ENCODE measurements at regions of chr10 and their contacts with region 1.

Region 1: GRCh38 chr10:67520924-67521520 is 175.0 kb downstream of the CTNNA3 start:
- DNase-seq: peak; percentile 2
- ATAC-seq: peak; percentile 97
- H3K4me3 ChIP-seq: no peak overlapping the region
- H3K27ac ChIP-seq: no peak overlapping the region
- H3K4me1 ChIP-seq: no peaks in the 10 kb centered on the region
- H3K27me3 ChIP-seq: no peaks in the 10 kb centered on the region
- CTCF ChIP-seq: peak; percentile 65 to 85 (median 74)
- EP300 ChIP-seq: no peak
- POLR2A ChIP-seq: no peak
- RAD21 ChIP-seq: peak; percentile 89

Region 2: GRCh38 chr10:66925896-66926715 is 594.9 kb before region 1 on chr10 and contains the start of gene LRRTM3:
- CTCF ChIA-PET with region 1: interaction called, 80 read pairs
- POLR2A ChIA-PET with region 1: no interaction called
- RAD21 ChIA-PET with region 1: interaction called, 10 read pairs
- SMC1A ChIA-PET with region 1: interaction called, 20 read pairs
- in situ Hi-C with region 1: no loop called
- intact Hi-C with region 1: loop called (anchors 5 kb)
- DNase-seq: peak; percentile 20
- ATAC-seq: peak; percentile 100
- H3K4me3 ChIP-seq: no peak within 1 kb of the TSS
- H3K27ac ChIP-seq: no peak within 1 kb of the TSS
- H3K4me1 ChIP-seq: no peaks in the 10 kb centered on the region
- H3K27me3 ChIP-seq: peaks cover 0 to 8% of the 10 kb centered on the region in 2 experiments; a peak in 2 of 4 replicates
- CTCF ChIP-seq: peak; percentile 67 to 76 (median 70); a peak in 5 of 6 replicates
- EP300 ChIP-seq: no peak
- POLR2A ChIP-seq: no peak
- RAD21 ChIP-seq: peak; percentile 53
- polyA plus RNA-seq, gene LRRTM3: not detected

Region 3: DNA sequence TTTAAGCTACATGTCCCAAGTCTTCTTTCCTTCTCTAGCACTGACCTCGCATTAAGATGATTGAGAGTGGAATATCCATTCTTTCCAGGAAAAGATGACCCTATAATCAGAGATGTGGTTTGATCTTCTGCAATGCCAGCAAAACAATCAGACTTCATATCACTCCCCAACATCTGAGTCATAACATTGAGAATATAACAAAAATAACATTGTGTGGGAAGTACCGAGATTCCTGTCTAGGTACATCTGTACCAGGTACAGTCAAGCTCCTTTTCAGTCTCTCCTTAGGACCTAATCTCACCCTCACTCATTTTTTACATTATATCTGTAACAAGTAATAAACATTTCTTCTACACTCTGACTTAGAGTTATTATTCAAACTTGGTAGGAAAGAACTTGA is 393.6 kb before region 1 on chr10:
- CTCF ChIA-PET with region 1: no interaction called
- POLR2A ChIA-PET with region 1: no interaction called
- RAD21 ChIA-PET with region 1: no interaction called
- SMC1A ChIA-PET with region 1: no interaction called
- in situ Hi-C with region 1: no loop called
- intact Hi-C with region 1: no loop called
- DNase-seq: no peak
- ATAC-seq: no peak
- H3K4me3 ChIP-seq: no peak overlapping the region
- H3K27ac ChIP-seq: no peak overlapping the region
- H3K4me1 ChIP-seq: no peaks in the 10 kb centered on the region
- H3K27me3 ChIP-seq: no peaks in the 10 kb centered on the region
- CTCF ChIP-seq: no peak
- EP300 ChIP-seq: no peak
- POLR2A ChIP-seq: no peak
- RAD21 ChIP-seq: no peak

Region 4: DNA sequence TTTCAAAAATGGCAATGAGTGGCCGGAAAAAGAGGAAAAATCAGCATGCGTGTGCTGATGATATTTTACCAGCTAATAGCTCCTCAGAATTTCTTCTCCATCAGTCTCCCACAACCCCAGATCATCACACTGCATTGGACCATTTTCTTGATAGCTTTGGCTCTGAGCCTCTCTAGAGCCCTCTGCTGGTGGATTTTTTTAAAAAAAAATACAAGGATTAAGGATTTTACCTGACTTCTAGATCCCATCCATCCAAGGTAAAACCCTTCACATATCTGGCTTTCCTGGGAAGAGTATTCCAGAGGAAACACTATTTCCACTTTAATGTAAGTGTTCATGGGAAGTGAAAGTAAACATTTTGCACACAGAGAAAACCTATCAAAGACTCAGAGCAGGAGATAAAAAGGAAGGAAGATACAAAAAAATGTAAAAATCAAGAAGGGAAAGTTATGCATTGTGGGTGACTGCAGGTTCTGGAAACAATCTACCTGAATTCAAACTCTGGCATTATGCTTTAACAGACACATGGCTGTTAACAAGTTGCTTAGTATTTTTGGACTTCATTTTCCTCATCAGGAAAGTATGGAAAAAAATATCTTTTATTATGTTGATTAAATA is 214.3 kb before region 1 on chr10:
- CTCF ChIA-PET with region 1: interaction called, 5 read pairs
- POLR2A ChIA-PET with region 1: no interaction called
- RAD21 ChIA-PET with region 1: interaction called, 5 read pairs
- SMC1A ChIA-PET with region 1: interaction called, 12 read pairs
- in situ Hi-C with region 1: no loop called
- intact Hi-C with region 1: loop called (anchors 5 kb)
- DNase-seq: no peak
- ATAC-seq: no peak; the same call in 2 of the 3 replicates
- H3K4me3 ChIP-seq: no peak overlapping the region
- H3K27ac ChIP-seq: no peak overlapping the region
- H3K4me1 ChIP-seq: no peaks in the 10 kb centered on the region
- H3K27me3 ChIP-seq: no peaks in the 10 kb centered on the region
- CTCF ChIP-seq: peak; percentile 32 to 47 (median 39); a peak in 5 of 6 replicates
- EP300 ChIP-seq: no peak
- POLR2A ChIP-seq: no peak
- RAD21 ChIP-seq: peak; percentile 37; the same call in 1 of the 2 replicates

Region 5: DNA sequence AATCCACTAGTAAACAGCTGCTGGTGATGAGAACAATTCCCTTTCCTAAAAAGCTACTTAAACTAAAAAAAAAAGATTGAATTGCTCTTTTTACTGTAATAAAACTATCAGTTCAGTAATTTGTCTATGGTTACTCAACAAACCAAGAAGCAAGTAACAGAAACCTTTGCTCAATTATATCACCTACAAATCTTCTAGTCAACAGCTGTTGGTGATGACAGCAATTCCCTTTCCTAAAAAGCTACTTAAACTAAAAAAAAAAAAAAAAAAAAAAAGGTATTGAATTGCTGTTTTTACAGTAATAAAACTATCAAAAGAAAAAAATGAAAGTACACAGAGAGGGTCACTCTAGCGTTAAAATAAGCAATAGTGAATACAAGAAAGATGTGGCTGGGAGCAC is 16.9 kb after region 1 on chr10:
- CTCF ChIA-PET with region 1: interaction called, 22 read pairs
- POLR2A ChIA-PET with region 1: no interaction called
- RAD21 ChIA-PET with region 1: interaction called, 14 read pairs
- SMC1A ChIA-PET with region 1: interaction called, 21 read pairs
- in situ Hi-C with region 1: no loop called
- intact Hi-C with region 1: no loop called
- DNase-seq: no peak
- ATAC-seq: no peak
- H3K4me3 ChIP-seq: no peak overlapping the region
- H3K27ac ChIP-seq: no peak overlapping the region
- H3K4me1 ChIP-seq: no peaks in the 10 kb centered on the region
- H3K27me3 ChIP-seq: no peaks in the 10 kb centered on the region
- CTCF ChIP-seq: no peak
- EP300 ChIP-seq: no peak
- POLR2A ChIP-seq: no peak
- RAD21 ChIP-seq: no peak

Region 6: GRCh38 chr10:67618116-67618515 is 97.1 kb after region 1 on chr10:
- CTCF ChIA-PET with region 1: interaction called, 4 read pairs
- POLR2A ChIA-PET with region 1: no interaction called
- RAD21 ChIA-PET with region 1: no interaction called
- SMC1A ChIA-PET with region 1: interaction called, 11 read pairs
- in situ Hi-C with region 1: no loop called
- intact Hi-C with region 1: no loop called
- DNase-seq: no peak
- ATAC-seq: no peak
- H3K4me3 ChIP-seq: no peak overlapping the region
- H3K27ac ChIP-seq: no peak overlapping the region
- H3K4me1 ChIP-seq: no peaks in the 10 kb centered on the region; the same call in 1 of the 2 replicates
- H3K27me3 ChIP-seq: no peaks in the 10 kb centered on the region
- CTCF ChIP-seq: no peak
- EP300 ChIP-seq: no peak
- POLR2A ChIP-seq: no peak
- RAD21 ChIP-seq: no peak

Region 7: GRCh38 chr10:68419376-68419775 is 898.4 kb after region 1 on chr10:
- CTCF ChIA-PET with region 1: no interaction called
- POLR2A ChIA-PET with region 1: no interaction called
- RAD21 ChIA-PET with region 1: no interaction called
- SMC1A ChIA-PET with region 1: no interaction called
- in situ Hi-C with region 1: no loop called
- intact Hi-C with region 1: no loop called
- DNase-seq: no peak
- ATAC-seq: no peak
- H3K4me3 ChIP-seq: no peak overlapping the region
- H3K27ac ChIP-seq: no peak overlapping the region
- H3K4me1 ChIP-seq: no peaks in the 10 kb centered on the region
- H3K27me3 ChIP-seq: no peaks in the 10 kb centered on the region
- CTCF ChIP-seq: no peak
- EP300 ChIP-seq: no peak
- POLR2A ChIP-seq: no peak
- RAD21 ChIP-seq: no peak